Calu3 (cell line): ENCODE measurements at regions of chr13 and their contacts with region 1.

Region 1: GRCh38 chr13:26062844-26063444 is 11.1 kb upstream of the SHISA2 start:
- DNase-seq: peak; percentile 37
- H3K4me3 Mint-ChIP-seq: no peak overlapping the region
- H3K27ac Mint-ChIP-seq: no peak overlapping the region
- H3K4me1 Mint-ChIP-seq: no peaks in the 10 kb centered on the region
- H3K27me3 Mint-ChIP-seq: no peaks in the 10 kb centered on the region
- CTCF ChIP-seq: peak; percentile 23

Region 2: DNA sequence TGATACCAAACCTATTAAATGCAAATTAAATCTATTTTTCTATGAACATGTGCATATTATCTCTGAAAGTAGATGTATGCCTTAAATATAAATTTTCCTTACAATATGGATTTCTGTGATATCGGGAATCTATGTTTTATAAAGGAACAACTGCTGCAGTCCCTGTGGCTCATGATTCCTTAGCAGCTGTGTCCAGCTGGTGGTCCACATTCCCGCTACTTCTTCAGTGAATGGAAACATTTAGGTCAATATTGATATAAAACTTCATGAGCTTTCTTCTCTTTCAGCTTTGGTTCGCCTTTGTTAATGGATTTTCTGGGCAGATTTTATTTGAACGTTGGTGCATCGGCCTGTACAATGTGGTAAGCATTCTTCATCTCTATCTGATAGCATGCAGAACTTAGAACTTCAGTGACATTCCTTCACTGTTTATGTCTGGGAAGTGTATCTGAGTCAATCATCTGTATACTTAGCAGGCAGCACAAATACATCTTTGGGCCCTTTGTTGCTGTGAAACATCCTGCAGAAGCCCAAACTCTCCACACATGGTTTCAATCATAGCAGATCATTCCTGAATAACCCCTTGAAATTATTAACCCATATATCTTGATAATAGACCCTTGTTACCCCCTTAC is 235.0 kb before region 1 on chr13:
- CTCF ChIA-PET with region 1: no interaction called
- intact Hi-C with region 1: loop called (anchors 2 kb)
- DNase-seq: no peak
- H3K4me3 Mint-ChIP-seq: no peak overlapping the region
- H3K27ac Mint-ChIP-seq: no peak overlapping the region
- H3K4me1 Mint-ChIP-seq: no peaks in the 10 kb centered on the region
- H3K27me3 Mint-ChIP-seq: peaks cover 10% of the 10 kb centered on the region
- CTCF ChIP-seq: no peak

Region 3: DNA sequence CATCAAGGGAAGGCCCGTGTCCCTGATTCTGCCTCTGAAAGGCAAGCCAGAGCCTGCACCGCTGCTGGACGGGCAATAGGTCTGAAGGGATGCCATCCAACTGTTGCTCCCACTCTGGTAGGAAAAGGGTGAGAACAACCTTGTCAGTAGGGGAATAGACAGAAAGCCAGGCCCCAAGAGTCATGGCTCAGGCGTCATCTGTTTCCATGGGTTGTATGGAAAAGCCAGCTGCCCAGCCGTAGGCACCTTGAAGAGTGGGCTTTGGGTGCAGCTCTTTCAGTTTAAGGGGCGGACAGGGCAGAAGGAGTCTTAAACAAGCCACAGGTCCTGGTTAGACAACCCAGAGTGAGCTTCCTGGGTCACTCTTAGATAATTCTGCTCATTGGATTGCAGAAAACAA is 92.6 kb after region 1 on chr13:
- CTCF ChIA-PET with region 1: no interaction called
- intact Hi-C with region 1: no loop called
- DNase-seq: no peak
- H3K4me3 Mint-ChIP-seq: no peak overlapping the region
- H3K27ac Mint-ChIP-seq: no peak overlapping the region
- H3K4me1 Mint-ChIP-seq: no peaks in the 10 kb centered on the region
- H3K27me3 Mint-ChIP-seq: peaks cover 44% of the 10 kb centered on the region
- CTCF ChIP-seq: no peak